CD8-positive, alpha-beta memory T cell (primary cell): ENCODE measurements at regions of chr3 and their contacts with region 1.

Region 1: GRCh38 chr3:16511681-16512434 is 1.6 kb downstream of the RFTN1 start:
- DNase-seq: peak; percentile 55 to 91 (median 90)
- H3K4me3 ChIP-seq: peak overlapping the region; percentile 81
- H3K4me3 Mint-ChIP-seq: peak overlapping the region; percentile 80 to 98 (median 94)
- H3K27ac ChIP-seq: peak overlapping the region; percentile 81
- H3K27ac Mint-ChIP-seq: peak overlapping the region; percentile 93 to 99 (median 94)
- H3K4me1 ChIP-seq: peaks cover 84% of the 10 kb centered on the region
- H3K4me1 Mint-ChIP-seq: peaks cover 83 to 88% (median 86%) of the 10 kb centered on the region in 3 donors
- H3K27me3 ChIP-seq: no peaks in the 10 kb centered on the region
- H3K27me3 Mint-ChIP-seq: no peaks in the 10 kb centered on the region

Region 2: DNA sequence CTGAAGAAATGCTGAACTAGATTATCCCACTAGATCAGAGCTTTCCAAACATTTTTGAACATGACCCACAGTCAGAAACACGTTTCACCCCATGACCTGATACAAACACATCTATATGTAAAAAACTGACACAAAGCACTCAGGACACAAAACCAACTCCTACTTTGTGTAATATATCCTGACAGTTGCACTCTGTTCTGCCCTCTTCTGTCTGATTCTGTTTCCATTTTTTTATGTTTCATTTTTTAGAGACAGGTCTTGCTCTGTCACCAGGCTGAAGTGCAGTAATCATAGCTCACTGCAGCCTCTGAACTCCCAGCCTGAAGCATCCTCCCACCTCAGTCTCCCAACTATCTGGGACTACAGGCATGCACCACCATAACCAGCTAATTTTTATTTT is 17.4 kb after region 1 on chr3:
- CTCF ChIA-PET with region 1: interaction called, 10 read pairs
- POLR2A ChIA-PET with region 1: no interaction called
- DNase-seq: peak in 1 of 5 donors; percentile 35
- H3K4me3 ChIP-seq: no peak overlapping the region
- H3K4me3 Mint-ChIP-seq: no peak overlapping the region
- H3K27ac ChIP-seq: no peak overlapping the region
- H3K27ac Mint-ChIP-seq: peak overlapping the region in 1 of 8 donors; percentile 25
- H3K4me1 ChIP-seq: no peaks in the 10 kb centered on the region
- H3K4me1 Mint-ChIP-seq: peaks cover 6 to 10% (median 8%) of the 10 kb centered on the region in 3 donors
- H3K27me3 ChIP-seq: no peaks in the 10 kb centered on the region
- H3K27me3 Mint-ChIP-seq: no peaks in the 10 kb centered on the region

Region 3: GRCh38 chr3:16546186-16547010 is 34.5 kb after region 1 on chr3:
- CTCF ChIA-PET with region 1: no interaction called
- POLR2A ChIA-PET with region 1: no interaction called
- DNase-seq: no peak
- H3K4me3 ChIP-seq: no peak overlapping the region
- H3K4me3 Mint-ChIP-seq: no peak overlapping the region
- H3K27ac ChIP-seq: no peak overlapping the region
- H3K27ac Mint-ChIP-seq: peak overlapping the region in 2 of 8 donors; percentile 24 to 52
- H3K4me1 ChIP-seq: peaks cover 5% of the 10 kb centered on the region
- H3K4me1 Mint-ChIP-seq: peaks cover 6 to 10% (median 10%) of the 10 kb centered on the region in 3 donors
- H3K27me3 ChIP-seq: no peaks in the 10 kb centered on the region
- H3K27me3 Mint-ChIP-seq: peaks cover 1 to 3% of the 10 kb centered on the region in 2 donors